Activated CD4-positive, alpha-beta T cell treated with anti-CD3 and anti-CD28 coated beads for 36 hours (primary cell): ENCODE measurements at regions of chr11 and their contacts with region 1.

Region 1: GRCh38 chr11:6377902-6378639 is 12.2 kb upstream of the SMPD1 start:
- DNase-seq: no peak
- ATAC-seq: peak; percentile 79
- H3K4me3 Mint-ChIP-seq: no peak overlapping the region
- H3K27ac Mint-ChIP-seq: peak overlapping the region; percentile 79
- H3K4me1 Mint-ChIP-seq: peaks cover 26% of the 10 kb centered on the region
- H3K27me3 Mint-ChIP-seq: no peaks in the 10 kb centered on the region

Region 2: DNA sequence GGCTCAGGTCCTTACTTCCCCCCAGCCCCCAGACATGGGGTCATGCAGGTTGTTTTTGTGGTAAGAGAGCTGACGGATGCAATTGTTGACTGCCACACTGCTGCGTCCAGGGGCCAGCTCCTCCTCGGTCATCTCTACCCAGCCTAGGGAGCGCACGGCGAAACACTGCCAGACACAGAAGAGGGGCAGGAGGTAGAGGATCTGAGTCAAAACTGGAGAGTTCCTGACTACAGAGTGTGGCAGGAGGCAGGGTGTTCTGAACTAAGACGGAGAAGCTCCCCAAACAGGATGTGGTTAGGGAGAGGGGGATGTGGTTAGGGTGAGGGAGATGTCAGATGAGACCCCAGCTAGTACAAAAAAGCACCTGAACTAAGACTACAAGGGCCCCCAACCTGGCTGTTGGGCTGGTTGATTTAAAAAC is 24.5 kb after region 1 on chr11:
- CTCF ChIA-PET with region 1: interaction called, 50 read pairs
- POLR2A ChIA-PET with region 1: interaction called, 11 read pairs
- intact Hi-C with region 1: no loop called
- DNase-seq: peak; percentile 85
- ATAC-seq: peak; percentile 88
- H3K4me3 Mint-ChIP-seq: peak overlapping the region; percentile 65
- H3K27ac Mint-ChIP-seq: peak overlapping the region; percentile 95
- H3K4me1 Mint-ChIP-seq: peaks cover 78% of the 10 kb centered on the region
- H3K27me3 Mint-ChIP-seq: no peaks in the 10 kb centered on the region

Region 3: DNA sequence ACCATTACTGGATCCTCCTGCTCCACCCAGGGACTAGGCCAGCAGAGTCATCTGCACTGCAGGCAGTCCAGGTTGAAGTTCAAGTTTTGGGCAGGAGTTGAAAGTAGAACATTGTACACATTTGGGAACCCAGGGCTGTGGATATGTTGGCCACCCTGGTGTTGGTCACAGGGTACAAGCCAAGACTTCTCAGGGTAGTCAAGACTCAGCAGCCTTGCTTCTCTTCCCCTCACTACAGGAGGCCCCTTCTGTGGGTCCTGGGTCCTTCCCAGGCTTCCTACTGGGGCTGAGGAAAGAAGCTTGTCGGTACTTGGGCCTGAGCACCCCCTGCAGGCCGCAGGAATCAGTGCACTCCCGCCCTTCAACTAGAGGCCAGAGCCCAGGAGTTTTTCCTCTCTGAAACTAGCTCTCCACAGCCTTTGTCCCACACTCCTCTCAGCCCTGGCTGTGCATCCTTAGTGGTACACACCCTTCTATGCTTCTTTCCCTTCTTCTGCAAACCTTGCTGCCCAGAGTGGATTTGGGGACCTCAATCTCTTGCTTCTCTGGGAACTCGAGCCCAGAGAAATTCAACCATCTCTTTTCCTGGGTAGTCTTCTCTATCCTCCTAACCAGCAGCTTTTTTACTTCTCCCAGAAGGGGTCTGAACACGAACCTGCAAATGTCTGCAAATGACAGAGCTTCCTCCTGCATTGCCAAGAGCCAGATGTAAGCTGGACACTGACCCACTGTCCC is 65.4 kb after region 1 on chr11:
- CTCF ChIA-PET with region 1: interaction called, 536 read pairs
- POLR2A ChIA-PET with region 1: interaction called, 19 read pairs
- intact Hi-C with region 1: loop called (anchors 1 kb)
- DNase-seq: peak; percentile 74
- ATAC-seq: peak; percentile 86
- H3K4me3 Mint-ChIP-seq: no peak overlapping the region
- H3K27ac Mint-ChIP-seq: no peak overlapping the region
- H3K4me1 Mint-ChIP-seq: no peaks in the 10 kb centered on the region
- H3K27me3 Mint-ChIP-seq: no peaks in the 10 kb centered on the region

Region 4: DNA sequence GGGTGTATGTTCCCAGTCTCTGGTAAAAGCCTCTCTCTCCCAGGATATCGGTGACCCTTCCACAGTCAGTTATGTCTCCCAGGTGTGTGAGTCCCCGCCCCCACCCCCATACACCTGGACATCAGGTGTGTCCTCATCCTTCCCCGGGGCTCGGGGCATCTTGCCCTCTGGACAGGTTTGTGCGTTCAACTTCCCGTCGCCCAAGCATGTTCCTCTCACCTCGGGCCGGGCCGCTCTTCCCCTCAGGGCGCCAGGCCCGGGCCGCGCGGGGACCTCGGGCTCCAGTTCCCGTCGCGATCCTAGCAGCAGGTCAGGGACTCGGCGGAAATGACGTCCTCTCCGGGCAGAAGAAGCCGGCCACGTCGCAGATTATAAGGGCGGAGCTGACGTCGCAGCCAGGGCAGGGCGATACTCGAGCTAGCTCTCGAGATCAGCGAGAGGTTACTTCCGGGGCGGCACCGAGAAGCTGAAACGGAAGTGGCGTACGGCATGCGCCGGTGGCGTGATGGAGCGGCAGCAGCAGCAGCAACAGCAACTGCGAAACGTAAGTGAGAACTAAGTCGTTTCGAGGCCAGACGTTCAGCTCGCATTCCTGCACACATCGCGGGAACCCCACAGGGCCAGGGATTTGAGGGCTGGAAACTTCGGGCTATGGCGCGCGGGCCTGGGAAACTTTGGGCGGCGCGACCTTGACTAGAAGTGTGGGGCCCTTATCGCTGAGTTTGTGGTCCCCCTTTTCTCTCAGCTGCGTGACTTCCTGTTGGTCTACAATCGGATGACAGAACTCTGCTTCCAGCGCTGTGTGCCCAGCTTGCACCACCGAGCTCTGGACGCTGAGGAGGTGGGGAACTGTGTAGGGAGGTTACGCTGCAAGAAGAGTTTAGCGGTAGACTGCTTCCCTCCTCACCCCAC is 103.2 kb after region 1 on chr11 and contains the starts of genes ARFIP2 and TIMM10B:
- CTCF ChIA-PET with region 1: interaction called, 15 read pairs
- POLR2A ChIA-PET with region 1: interaction called, 6 read pairs
- intact Hi-C with region 1: loop called in 1 of 2 experiments (anchors 1 kb)
- DNase-seq: peak; percentile 99
- ATAC-seq: peak; percentile 98
- H3K4me3 Mint-ChIP-seq: peak within 1 kb of the TSS; percentile 80
- H3K27ac Mint-ChIP-seq: peak within 1 kb of the TSS; percentile 92
- H3K4me1 Mint-ChIP-seq: peaks cover 30% of the 10 kb centered on the region
- H3K27me3 Mint-ChIP-seq: no peaks in the 10 kb centered on the region
- total RNA-seq, gene ARFIP2: 36.7 to 40.3 TPM
- total RNA-seq, gene TIMM10B: 27.1 to 39.2 TPM

Region 5: GRCh38 chr11:6505577-6506240 is 127.6 kb after region 1 on chr11:
- CTCF ChIA-PET with region 1: interaction called, 69 read pairs
- POLR2A ChIA-PET with region 1: interaction called, 4 read pairs
- intact Hi-C with region 1: loop called (anchors 1 kb)
- DNase-seq: no peak
- ATAC-seq: peak; percentile 57
- H3K4me3 Mint-ChIP-seq: no peak overlapping the region
- H3K27ac Mint-ChIP-seq: no peak overlapping the region
- H3K4me1 Mint-ChIP-seq: no peaks in the 10 kb centered on the region
- H3K27me3 Mint-ChIP-seq: no peaks in the 10 kb centered on the region

Region 6: DNA sequence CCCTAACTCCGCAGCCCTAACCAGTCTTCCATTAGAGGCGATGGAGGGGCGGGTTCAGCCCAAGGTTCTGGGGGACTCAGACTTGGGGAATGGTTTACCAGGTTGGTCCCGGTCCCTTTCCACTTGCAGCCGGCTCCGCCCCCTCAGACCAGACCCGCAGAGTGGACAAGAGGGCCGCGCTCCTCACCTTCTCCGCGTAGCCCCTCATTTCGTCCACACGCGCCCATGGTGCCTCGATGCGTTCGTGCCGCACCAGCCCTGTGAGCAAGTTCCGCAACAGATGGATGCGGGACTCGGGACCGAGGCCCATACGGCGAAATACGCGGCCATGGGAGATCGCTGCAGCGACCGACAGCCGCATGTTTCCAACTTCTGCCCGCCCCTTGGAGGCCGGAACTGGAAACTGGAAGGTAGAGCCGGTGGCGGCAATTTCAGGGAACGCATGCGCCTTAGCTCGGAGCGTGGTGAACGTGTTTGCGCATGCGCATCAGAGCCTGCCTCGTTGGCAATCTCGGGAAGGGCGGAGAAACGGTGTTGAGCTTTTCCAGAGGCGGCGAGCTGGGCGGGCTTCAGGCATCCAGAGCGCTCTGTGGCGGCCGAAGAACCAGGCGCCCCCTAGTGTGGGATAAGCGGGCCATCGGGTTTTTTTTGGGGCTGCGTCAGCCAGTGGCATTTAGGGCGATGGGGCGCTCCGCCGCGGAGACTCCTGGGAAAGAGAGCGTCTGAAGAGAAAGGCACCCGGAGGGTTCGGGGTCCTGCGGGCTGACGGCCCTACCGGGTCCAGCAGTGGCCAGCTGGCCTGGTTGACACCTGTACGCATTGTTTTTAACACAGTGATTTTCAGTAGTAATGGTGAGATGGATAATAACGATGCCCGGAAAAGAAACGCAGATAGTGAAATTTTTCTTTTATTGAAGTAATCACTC is 305.1 kb after region 1 on chr11 and contains the start of gene MRPL17:
- CTCF ChIA-PET with region 1: interaction called, 14 read pairs
- POLR2A ChIA-PET with region 1: interaction called, 3 read pairs
- intact Hi-C with region 1: no loop called
- DNase-seq: peak; percentile 99
- ATAC-seq: peak; percentile 96
- H3K4me3 Mint-ChIP-seq: peak within 1 kb of the TSS; percentile 97
- H3K27ac Mint-ChIP-seq: peak within 1 kb of the TSS; percentile 100
- H3K4me1 Mint-ChIP-seq: peaks cover 29% of the 10 kb centered on the region
- H3K27me3 Mint-ChIP-seq: no peaks in the 10 kb centered on the region
- total RNA-seq, gene MRPL17: 118 to 156 TPM